Psoas muscle (tissue), 8 donors: ENCODE measurements at regions of chr5 and their contacts with region 1.

Region 1: GRCh38 chr5:96997265-96997859 is 61.5 kb downstream of the LNPEP start:
- DNase-seq: no peak
- ATAC-seq: peak in 2 of 4 donors; percentile 67 to 69
- H3K4me3 ChIP-seq: no peak overlapping the region
- H3K27ac ChIP-seq: no peak overlapping the region
- H3K4me1 ChIP-seq: no peaks in the 10 kb centered on the region
- H3K27me3 ChIP-seq: no peaks in the 10 kb centered on the region
- CTCF ChIP-seq: peak; percentile 51

Region 2: GRCh38 chr5:96752341-96753016 is 244.9 kb before region 1 on chr5:
- intact Hi-C with region 1: loop called in 1 of 2 experiments (anchors 10 kb)
- DNase-seq: no peak
- ATAC-seq: peak in 1 of 4 donors; percentile 30
- H3K4me3 ChIP-seq: no peak overlapping the region
- H3K27ac ChIP-seq: peak overlapping the region; percentile 41
- H3K4me1 ChIP-seq: peaks cover 4% of the 10 kb centered on the region
- H3K27me3 ChIP-seq: no peaks in the 10 kb centered on the region
- CTCF ChIP-seq: peak; percentile 69

Region 3: GRCh38 chr5:96901384-96901783 is 96.0 kb before region 1 on chr5:
- intact Hi-C with region 1: no loop called
- DNase-seq: no peak
- ATAC-seq: no peak
- H3K4me3 ChIP-seq: no peak overlapping the region
- H3K27ac ChIP-seq: no peak overlapping the region
- H3K4me1 ChIP-seq: no peaks in the 10 kb centered on the region
- H3K27me3 ChIP-seq: no peaks in the 10 kb centered on the region
- CTCF ChIP-seq: peak; percentile 9